ENCODE measurements at regions of chr2 and their contacts with region 1.

Region 1: GRCh38 chr2:196926562-196927375 is at the start of gene PGAP1:
- DNase-seq: peak; percentile 87
- H3K4me3 ChIP-seq: peak within 1 kb of the TSS; percentile 93 to 97 (median 96)
- H3K27ac ChIP-seq: peak within 1 kb of the TSS; percentile 85
- H3K4me1 ChIP-seq: peaks cover 19% of the 10 kb centered on the region
- H3K27me3 ChIP-seq: no peaks in the 10 kb centered on the region
- CTCF ChIP-seq: no peak
- total RNA-seq, gene PGAP1: 13.7 to 21.3 TPM

Region 2: GRCh38 chr2:196849895-196850294 is 76.9 kb before region 1 on chr2:
- CTCF ChIA-PET with region 1: no interaction called
- dilution Hi-C with region 1: no loop called
- in situ Hi-C with region 1: no loop called
- intact Hi-C with region 1: loop called (anchors 5 kb)
- DNase-seq: peak; percentile 26
- H3K4me3 ChIP-seq: no peak overlapping the region
- H3K27ac ChIP-seq: no peak overlapping the region
- H3K4me1 ChIP-seq: no peaks in the 10 kb centered on the region
- H3K27me3 ChIP-seq: no peaks in the 10 kb centered on the region
- CTCF ChIP-seq: peak; percentile 9 to 38

Region 3: DNA sequence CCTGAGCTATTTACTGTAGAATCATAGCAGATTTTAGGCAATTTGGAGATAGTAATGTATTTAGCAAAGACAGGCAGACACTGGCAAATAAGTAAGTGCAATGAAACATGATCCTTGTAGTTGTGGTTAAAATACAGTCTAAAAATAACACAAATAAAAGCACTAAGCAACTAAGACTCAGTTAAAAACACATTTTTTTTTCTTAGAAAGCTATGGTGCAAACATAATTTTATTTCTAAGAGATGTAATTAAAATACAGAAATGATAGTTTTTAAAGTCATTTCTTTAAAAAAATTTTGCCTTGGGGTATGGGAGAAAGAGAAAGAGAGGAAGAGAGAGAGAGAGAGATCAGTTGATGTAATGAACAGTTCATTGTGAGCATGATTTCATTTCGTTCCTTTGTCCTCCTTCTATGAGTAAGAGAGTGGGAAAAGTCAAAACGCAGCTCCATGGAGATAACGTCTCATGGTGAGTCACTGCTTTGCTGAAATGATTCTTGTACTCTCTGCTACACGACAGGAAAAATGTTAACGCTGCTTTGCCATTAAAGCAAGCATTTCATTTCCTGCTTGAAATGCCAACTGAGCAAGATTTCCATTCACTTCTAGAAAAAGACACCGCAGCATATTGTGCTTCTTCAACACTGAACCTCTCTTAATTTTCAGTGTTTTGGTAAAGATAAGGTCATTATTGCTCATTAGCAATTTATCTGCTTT is 61.0 kb after region 1 on chr2:
- CTCF ChIA-PET with region 1: no interaction called
- dilution Hi-C with region 1: no loop called
- in situ Hi-C with region 1: no loop called
- intact Hi-C with region 1: loop called (anchors 1 kb)
- DNase-seq: peak; percentile 97
- H3K4me3 ChIP-seq: peak overlapping the region in 2 of 3 experiments; percentile 15 to 27
- H3K27ac ChIP-seq: peak overlapping the region; percentile 97
- H3K4me1 ChIP-seq: peaks cover 11% of the 10 kb centered on the region
- H3K27me3 ChIP-seq: no peaks in the 10 kb centered on the region
- CTCF ChIP-seq: no peak

Region 4: DNA sequence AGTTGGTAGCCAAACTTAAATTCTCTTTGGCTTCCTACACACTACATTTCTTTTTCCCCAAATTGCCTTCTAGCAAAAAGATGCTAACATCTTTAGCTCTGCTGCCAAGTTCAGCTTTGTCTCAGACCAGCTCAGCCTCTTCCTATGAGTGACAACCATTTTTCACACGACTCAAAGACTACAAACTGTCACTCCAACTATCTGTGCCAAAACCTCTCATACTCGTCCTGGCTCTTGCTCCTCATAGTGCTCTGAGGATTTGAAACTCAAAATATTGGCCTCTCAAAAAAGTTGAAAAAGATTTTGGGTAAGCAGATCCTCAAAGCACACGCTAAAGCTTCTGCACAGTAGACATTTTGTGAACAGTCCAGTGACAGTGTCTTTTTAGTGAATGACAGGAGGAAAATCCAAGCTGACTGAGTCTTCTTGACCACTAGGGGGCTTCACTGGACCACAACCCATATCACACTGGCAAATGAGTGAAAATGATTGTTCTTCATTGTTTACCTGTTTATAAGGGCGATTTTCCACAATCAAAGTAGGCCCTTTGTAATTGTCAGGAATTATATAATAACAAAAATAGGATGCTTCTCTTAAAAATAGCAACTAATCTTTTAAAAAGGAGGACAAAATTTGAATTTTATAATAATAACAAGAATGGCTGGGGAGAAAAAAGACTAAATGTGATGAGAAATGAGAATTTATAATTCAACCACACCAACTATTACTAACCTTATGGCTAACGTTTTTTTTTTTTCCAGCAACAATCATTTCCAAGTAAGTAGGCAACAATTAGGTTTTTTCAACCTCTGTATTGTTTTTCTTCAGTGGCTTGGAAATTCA is 85.3 kb after region 1 on chr2:
- CTCF ChIA-PET with region 1: no interaction called
- dilution Hi-C with region 1: no loop called
- in situ Hi-C with region 1: no loop called
- intact Hi-C with region 1: loop called (anchors 1 kb)
- DNase-seq: peak; percentile 32
- H3K4me3 ChIP-seq: no peak overlapping the region
- H3K27ac ChIP-seq: no peak overlapping the region
- H3K4me1 ChIP-seq: peaks cover 4% of the 10 kb centered on the region
- H3K27me3 ChIP-seq: no peaks in the 10 kb centered on the region
- CTCF ChIP-seq: peak; percentile 73 to 83

Region 5: DNA sequence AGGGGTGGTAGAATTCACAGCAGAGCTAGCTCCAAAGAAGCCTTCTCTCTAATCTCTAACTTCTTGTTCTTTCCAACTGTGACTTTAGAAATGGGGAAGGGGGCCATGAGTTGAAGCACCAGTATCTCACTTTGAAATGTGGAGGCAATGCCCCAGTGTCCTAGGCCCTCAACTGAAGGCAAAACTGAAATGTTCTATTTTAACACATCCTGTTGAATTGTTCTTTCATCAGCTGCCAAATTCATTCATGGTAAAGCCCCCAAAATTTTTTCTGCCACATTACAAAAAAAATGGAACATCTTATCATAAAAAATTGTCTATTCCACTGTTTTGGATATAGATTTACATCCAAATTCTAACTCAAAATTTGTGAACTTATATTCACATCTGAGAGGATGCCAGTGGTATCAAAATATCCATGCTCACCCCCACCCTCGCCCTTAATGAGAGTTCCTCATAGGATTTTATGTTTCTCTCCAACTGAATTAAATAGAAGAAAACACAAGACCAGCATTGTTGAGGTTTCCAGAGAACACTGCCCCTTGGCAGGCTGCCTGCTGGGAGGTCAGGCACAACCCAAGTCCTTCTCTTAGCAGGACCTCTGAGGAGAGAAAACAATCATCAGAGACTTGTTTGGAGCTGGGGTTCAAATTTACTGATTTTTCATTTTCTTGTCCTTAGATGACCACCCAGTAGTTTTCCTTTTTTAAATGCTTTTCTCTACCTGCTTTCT is 147.1 kb after region 1 on chr2:
- CTCF ChIA-PET with region 1: no interaction called
- dilution Hi-C with region 1: no loop called
- in situ Hi-C with region 1: no loop called
- intact Hi-C with region 1: no loop called
- DNase-seq: no peak
- H3K4me3 ChIP-seq: no peak overlapping the region
- H3K27ac ChIP-seq: no peak overlapping the region
- H3K4me1 ChIP-seq: no peaks in the 10 kb centered on the region
- H3K27me3 ChIP-seq: no peaks in the 10 kb centered on the region
- CTCF ChIP-seq: no peak

Region 6: DNA sequence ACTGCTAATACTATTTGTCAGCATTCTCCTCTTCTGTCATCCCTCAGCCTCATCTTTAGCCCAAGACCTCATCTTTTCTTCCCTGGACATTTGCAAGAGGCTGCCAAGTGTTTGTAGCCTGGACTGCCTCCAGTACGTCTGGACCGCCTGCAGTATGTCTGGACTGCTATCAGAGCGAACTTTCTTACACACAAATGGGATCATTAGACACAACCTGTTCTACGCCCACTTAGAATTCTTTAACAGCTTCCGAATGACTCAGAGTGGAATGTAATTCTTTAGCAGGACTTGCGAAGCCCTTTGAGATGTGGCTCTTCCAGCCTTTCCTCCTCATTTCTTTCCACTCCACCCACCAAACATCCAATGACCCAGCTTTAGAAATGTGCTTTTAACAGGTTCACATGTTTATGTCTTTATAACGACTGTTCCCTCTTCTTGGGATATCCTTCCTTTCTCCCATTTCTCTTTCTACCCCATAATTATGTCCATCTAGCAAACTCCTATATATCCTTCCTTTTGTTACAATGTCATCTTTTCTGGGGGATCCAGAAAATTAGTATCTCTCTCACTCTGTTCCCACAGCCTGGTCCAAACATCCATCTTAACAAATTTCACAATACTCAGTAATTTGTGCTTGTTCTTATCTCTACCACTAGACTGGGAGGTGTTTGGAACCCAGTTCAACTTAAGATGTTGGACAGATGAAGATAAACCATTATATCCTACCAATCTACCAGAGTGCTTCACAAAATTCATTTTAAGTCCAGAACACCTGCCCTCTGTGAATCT is 171.0 kb after region 1 on chr2:
- CTCF ChIA-PET with region 1: no interaction called
- dilution Hi-C with region 1: no loop called
- in situ Hi-C with region 1: no loop called
- intact Hi-C with region 1: loop called (anchors 5 kb)
- DNase-seq: peak; percentile 54
- H3K4me3 ChIP-seq: no peak overlapping the region
- H3K27ac ChIP-seq: no peak overlapping the region
- H3K4me1 ChIP-seq: peaks cover 8% of the 10 kb centered on the region
- H3K27me3 ChIP-seq: no peaks in the 10 kb centered on the region
- CTCF ChIP-seq: no peak